A549 (cell line): ENCODE measurements at regions of chr18 and their contacts with region 1.

Region 1: DNA sequence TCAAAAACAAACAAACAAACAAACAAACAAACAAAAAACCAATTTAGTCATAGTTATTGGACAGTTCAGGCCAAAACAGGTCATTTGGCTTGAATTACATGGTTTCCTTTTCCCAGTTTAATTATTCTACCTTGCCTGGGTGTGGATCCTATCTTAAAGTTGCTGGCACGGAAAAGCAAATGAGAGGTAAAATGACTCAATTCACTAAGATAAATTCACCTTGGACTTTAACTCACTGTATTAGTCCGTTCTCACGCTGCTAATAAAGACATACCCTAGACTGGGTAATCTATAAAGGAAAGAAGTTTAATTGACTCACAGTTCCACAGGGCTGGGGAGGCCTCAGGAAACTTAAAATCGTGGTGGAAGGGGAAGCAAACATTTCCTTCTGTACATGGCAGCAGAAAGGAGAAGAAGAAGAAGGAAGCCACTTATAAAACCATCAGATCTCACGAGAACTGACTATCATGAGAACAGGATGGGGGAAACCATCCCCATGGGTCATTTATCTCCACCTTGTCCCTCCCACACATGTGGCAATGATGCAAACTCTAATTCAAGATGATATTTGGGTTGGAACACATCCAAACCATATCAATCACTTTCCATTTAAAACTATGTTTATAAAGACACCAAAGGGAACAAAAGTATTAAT is 22.5 kb upstream of the TRAPPC8 start:
- DNase-seq: no peak
- ATAC-seq: no peak
- H3K4me3 ChIP-seq: no peak overlapping the region
- H3K27ac ChIP-seq: no peak overlapping the region
- H3K4me1 ChIP-seq: no peaks in the 10 kb centered on the region
- CTCF ChIP-seq: no peak
- EP300 ChIP-seq: no peak
- POLR2A ChIP-seq: no peak
- RAD21 ChIP-seq: no peak

Region 2: DNA sequence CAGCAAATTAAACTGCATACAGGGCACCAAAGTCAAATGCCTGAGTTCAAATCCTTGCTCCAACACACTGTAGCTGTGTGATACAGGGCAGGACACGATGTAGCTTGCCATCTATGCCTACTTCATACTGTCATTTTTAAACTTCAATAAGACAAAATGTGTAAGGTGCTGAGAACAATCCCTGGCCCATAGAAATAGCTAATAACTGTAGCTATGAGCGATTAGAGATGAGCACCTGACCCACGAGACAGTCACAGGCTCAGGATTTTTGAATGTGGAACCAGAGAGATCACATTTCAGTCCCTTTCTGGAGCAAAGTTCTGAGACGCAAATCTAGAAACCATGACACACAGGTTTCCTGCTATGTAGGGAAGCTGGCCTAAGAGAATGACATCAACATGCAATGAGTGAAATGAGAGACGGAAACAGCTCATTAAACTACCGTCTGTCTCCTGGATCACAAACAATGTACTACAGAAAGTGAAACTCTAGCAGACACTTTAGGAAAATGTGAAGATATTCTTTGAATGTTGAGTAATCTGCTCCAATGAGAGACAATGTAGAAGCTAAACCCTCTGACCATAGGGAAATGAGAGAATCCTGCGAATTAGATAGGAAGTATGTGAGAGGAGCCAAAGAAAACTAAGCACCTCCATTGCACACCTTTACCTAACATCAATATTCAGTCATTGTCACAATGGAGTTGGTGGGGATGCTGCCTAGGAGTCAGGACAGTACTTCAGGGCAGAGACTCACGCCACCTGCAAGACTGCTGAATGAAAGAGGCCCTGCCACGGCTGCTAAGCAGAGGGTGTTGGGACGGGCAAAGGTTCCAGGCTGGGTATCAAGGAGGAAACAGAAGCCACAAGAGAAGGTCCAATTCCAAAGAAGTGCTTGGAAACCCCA is 306.5 kb before region 1 on chr18:
- CTCF ChIA-PET with region 1: no interaction called
- POLR2A ChIA-PET with region 1: no interaction called
- DNase-seq: no peak
- ATAC-seq: no peak
- H3K4me3 ChIP-seq: no peak overlapping the region
- H3K27ac ChIP-seq: no peak overlapping the region
- H3K4me1 ChIP-seq: 0 out of 3 replicates have a peak, but pooled peaks cover 3% of the 10 kb centered on the region
- CTCF ChIP-seq: no peak
- EP300 ChIP-seq: no peak
- POLR2A ChIP-seq: no peak
- RAD21 ChIP-seq: no peak

Region 3: DNA sequence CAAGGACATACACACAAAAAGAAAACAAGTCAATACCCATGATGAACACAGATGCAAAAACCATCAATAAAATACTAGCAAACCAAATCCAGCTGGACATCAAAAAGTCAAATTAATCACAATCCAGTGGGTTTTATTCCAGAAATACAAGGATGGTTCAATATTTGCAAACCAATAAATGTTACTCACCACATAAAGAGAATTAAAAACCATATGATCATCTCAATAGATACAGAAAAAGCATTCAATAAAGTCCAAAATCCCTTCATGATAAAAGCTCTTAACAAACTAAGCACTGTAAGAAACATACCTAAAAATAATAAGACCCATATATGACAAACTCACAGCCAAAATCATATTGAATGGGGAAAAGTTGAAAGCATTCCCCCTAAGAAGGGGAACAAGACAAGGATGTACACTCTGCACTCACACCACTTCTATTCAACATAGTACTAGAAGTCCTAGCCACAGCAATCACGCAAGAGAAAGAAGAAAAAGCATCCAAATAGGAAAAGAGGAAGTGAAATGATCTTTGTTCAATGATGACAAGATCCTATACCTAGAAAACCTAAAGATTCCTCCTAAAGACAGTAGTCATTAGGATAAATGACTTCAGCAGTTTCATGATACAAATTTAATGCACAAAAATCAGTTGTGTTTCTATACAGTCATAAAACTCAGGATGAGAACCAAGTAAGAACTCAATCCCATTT is 85.1 kb before region 1 on chr18:
- CTCF ChIA-PET with region 1: no interaction called
- POLR2A ChIA-PET with region 1: no interaction called
- DNase-seq: no peak
- ATAC-seq: no peak
- H3K4me3 ChIP-seq: no peak overlapping the region
- H3K27ac ChIP-seq: no peak overlapping the region
- H3K4me1 ChIP-seq: no peaks in the 10 kb centered on the region
- CTCF ChIP-seq: no peak
- EP300 ChIP-seq: no peak
- POLR2A ChIP-seq: no peak
- RAD21 ChIP-seq: no peak

Region 4: DNA sequence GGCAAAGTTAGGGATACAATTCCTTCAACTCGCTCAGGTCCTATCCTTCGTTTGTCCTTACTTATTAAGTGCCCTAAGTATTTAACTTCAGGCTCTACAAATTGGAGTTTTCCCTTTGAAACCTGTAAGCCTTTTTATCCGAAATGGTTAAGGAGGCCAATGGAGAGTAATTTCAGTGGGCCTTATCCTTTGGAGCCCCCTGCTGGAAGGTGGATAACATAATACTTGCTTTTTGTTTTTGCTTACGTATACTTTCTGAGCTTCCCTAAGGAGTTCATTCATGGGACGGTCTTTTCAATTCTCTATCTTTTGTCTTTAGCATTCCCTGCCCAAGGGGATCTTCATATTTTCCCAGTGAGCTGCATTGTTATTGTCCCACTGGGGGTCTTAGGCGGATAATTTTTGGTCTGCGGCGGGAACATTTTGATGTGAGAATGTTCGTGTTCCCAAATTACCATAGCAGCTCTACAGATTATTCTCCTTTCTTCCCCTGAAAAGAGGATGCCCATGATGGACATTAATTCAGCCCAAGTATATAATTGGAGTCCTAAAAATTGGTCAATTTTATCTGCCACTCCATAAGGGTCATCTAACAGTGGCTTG is 11.9 kb after region 1 on chr18:
- CTCF ChIA-PET with region 1: interaction called, 15 read pairs
- POLR2A ChIA-PET with region 1: no interaction called
- DNase-seq: peak; percentile 10 to 53
- ATAC-seq: peak in 1 of 2 experiments; percentile 58; a peak in 2 of 6 replicates
- H3K4me3 ChIP-seq: no peak overlapping the region
- H3K27ac ChIP-seq: no peak overlapping the region
- H3K4me1 ChIP-seq: no peaks in the 10 kb centered on the region
- CTCF ChIP-seq: peak; percentile 32; the same call in 2 of the 3 replicates
- EP300 ChIP-seq: no peak
- POLR2A ChIP-seq: no peak
- RAD21 ChIP-seq: peak; percentile 49 to 71